Breast epithelium (tissue), 4 donors: ENCODE measurements at regions of chr4 and their contacts with region 1.

Region 1: DNA sequence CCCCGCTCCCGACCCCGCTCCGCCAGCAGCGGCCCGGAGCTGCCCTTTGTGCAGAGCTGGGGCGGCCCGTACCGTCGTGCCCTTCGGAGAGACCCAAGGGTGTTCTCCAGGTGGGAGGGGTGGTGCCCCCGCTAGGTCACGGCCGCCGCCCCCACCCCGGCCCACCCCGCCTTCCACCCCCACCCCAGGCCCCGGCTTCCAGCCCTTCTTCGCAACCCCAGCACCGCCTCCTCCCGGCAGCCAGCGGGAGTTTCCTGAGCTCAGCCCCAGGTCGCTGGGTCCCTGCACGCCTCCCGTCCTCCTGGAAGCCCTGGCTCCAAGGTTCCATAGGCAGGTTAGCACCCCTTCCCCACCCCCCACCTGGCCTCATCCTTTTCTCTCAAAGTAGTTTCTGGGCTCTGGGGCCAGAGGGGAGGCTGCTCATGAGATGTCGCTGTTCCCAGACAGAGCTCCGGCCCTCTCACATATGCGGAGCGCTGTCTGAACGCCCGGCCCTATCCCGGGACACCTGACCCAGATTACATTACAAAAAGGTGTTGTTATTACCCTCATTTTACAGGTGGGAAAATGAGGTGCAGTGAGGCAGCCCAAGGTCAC is 25.2 kb upstream of the FGFR3 start:
- DNase-seq: no peak
- H3K4me3 ChIP-seq: peak overlapping the region; percentile 32 to 77 (median 52)
- H3K27ac ChIP-seq: no peak overlapping the region
- H3K4me1 ChIP-seq: peaks cover 0 to 6% of the 10 kb centered on the region in 2 donors
- H3K27me3 ChIP-seq: peaks cover 0 to 4% of the 10 kb centered on the region in 2 donors
- CTCF ChIP-seq: no peak
- POLR2A ChIP-seq: no peak

Region 2: GRCh38 chr4:931960-932712 is 835.7 kb before region 1 on chr4 and contains the starts of genes GAK and TMEM175:
- intact Hi-C with region 1: loop called (anchors 5 kb)
- DNase-seq: peak; percentile 95
- H3K4me3 ChIP-seq: peak within 1 kb of the TSS; percentile 82 to 99 (median 96)
- H3K27ac ChIP-seq: peak within 1 kb of the TSS; percentile 89 to 90
- H3K4me1 ChIP-seq: peaks cover 3 to 13% of the 10 kb centered on the region in 2 donors
- H3K27me3 ChIP-seq: no peaks in the 10 kb centered on the region
- CTCF ChIP-seq: peak in 2 of 3 donors; percentile 7 to 21
- POLR2A ChIP-seq: peak; percentile 16
- total RNA-seq, gene GAK: 76.2 to 95.7 (median 81.9) TPM
- total RNA-seq, gene TMEM175: 26.2 to 32.2 (median 28.2) TPM

Region 3: DNA sequence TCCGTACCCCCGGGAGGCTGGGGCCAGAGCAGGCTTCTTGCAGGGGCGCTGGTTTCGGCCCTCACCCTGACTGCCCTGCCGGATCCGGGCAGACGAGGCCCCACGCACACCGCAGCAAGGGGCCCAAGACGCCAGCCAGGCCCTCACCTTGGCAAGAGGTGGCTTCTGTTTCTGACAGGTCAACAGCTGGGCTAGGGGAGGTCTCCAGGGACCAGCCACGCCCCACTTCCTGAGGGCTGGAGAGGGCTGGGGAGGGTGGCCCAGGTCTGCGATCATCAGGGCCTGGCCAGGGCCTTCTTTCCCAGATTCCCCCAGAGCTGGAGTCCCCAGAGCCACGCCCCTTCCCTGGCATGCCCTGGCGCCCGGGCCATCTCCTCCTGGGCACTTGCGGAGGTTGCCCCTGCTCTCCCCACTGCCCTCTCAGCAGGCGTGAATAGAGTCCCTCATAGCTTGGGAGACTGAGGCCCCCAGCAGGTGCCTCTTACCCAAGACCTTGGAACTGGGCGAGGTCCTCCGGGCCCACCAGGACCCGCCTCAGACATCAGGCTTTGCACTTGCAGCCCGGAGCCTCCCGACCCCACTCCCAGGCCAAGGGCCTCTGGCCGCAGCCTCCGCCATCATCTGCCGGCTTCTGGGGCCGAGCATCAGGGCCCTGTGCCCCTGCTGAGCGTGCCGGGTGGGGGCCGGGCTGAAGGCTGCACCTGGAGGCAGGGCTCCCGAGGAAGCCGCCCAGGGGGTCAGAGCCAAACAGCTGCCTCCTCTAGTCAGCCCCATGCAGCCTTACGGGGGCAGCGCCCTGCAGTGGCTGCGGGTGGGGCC is 18.9 kb after region 1 on chr4:
- intact Hi-C with region 1: loop called (anchors 1 kb)
- DNase-seq: no peak
- H3K4me3 ChIP-seq: no peak overlapping the region
- H3K27ac ChIP-seq: no peak overlapping the region
- H3K4me1 ChIP-seq: no peaks in the 10 kb centered on the region
- H3K27me3 ChIP-seq: no peaks in the 10 kb centered on the region
- CTCF ChIP-seq: no peak
- POLR2A ChIP-seq: no peak

Region 4: DNA sequence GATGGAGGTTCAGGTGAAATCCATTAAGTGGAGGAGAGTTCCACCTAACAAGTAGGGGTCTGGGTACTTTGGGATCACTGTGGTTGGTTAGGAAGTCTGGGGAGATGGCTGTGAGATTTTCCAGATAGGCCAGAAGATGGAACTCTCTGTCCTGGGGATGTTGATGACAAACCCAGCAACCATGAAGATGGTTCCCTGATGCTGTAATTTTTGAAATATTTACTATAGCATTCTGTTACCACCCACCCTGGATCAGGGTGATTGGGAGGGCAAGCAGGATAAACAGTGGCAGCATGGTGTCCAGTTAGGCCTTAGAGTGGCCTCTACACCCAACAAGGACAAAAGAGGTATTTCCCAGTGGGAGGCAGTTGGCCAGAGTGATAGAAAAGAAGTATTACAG is 256.8 kb after region 1 on chr4:
- intact Hi-C with region 1: no loop called
- DNase-seq: no peak
- H3K4me3 ChIP-seq: no peak overlapping the region
- H3K27ac ChIP-seq: no peak overlapping the region
- H3K4me1 ChIP-seq: no peaks in the 10 kb centered on the region
- H3K27me3 ChIP-seq: no peaks in the 10 kb centered on the region
- CTCF ChIP-seq: no peak
- POLR2A ChIP-seq: no peak

Region 5: DNA sequence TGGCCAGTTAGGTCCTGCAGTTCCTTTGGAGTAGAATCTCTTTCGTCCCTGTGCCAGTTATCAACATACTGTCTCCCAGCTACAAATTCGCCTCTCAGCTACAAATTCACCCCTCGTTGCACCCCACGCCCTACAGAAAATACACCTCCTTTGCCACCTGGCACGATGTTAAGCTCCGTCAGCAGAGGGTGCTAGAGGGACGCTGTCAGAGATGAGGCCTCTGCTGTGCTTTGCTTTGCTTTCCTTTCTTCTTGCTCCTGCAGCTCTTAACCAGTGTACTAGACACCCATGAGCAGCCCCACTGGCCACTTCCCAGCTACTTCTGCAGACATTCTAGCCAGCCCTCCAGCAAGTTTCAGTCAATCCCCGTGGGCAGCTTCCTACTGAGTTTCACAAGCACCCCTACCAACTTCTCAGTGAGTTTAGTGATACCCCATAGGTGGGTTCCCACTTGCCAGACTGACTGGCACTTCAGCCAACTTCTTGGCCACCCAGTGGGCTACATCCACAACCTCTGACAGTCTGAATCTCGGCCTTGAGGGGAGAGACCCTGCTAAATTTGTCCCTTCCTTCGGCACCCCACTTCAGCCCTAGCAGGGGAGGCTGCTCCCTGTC is 452.3 kb after region 1 on chr4:
- intact Hi-C with region 1: no loop called
- DNase-seq: peak; percentile 34 to 62
- H3K4me3 ChIP-seq: no peak overlapping the region
- H3K27ac ChIP-seq: no peak overlapping the region
- H3K4me1 ChIP-seq: no peaks in the 10 kb centered on the region
- H3K27me3 ChIP-seq: no peaks in the 10 kb centered on the region
- CTCF ChIP-seq: peak in 2 of 3 donors; percentile 79 to 83
- POLR2A ChIP-seq: no peak